ENCODE measurements at regions of chr3 and their contacts with region 1.

Region 1: DNA sequence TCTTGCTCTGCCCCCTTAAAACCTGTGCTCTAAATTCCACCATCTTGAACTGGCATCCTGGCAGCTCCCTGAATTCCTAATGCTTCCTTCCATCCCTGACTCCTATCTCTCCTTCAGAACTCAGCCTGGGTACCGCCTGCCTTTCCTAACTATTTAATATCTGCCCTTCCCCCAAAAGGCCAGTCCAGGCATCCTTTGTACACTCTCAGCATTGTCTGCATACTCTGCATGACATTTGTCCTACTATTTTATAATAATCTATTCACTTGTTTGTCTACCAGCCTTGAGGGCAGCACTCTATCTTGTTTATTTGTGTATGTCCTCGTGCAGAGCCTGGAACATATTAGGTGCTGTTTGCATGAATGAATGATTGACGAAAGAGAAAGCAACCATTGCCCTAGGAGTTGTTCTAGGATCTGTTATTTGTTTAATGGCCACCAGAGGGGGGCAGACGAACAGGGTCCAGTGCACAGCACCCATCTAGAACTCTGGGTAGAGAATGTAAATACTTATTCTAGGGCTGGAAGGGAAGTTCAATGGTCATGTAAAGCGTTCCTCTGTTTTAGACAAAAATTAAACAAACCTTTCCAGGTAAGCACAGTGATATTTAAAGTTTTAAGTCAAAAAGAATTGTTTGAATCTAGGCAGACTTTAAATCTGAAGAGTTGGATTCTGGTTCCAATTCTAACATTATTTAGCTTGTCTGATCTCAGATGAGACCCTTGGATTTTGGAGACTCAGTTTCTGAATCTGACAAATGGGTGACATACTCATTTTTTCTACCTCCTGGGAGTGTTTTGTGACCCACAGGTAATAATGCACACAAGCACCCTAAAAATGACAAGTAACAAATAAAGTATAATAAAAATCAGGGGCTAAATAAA is 125.8 kb upstream of the GALNT15 start:
- DNase-seq: peak in 1 of 2 donors; percentile 72
- ATAC-seq: peak; percentile 81 to 98 (median 84)
- H3K4me3 ChIP-seq: no peak overlapping the region
- H3K4me3 Mint-ChIP-seq: peak overlapping the region; percentile 81
- H3K27ac ChIP-seq: no peak overlapping the region
- H3K27ac Mint-ChIP-seq: no peak overlapping the region
- H3K4me1 ChIP-seq: no peaks in the 10 kb centered on the region
- H3K4me1 Mint-ChIP-seq: peaks cover 6 to 7% of the 10 kb centered on the region in 2 donors
- H3K27me3 ChIP-seq: no peaks in the 10 kb centered on the region
- H3K27me3 Mint-ChIP-seq: peaks cover 0 to 10% of the 10 kb centered on the region in 2 donors
- CTCF ChIP-seq: peak; percentile 83

Region 2: GRCh38 chr3:16247276-16248061 is 198.8 kb after region 1 on chr3:
- intact Hi-C with region 1: loop called (anchors 1 kb)
- DNase-seq: peak; percentile 64 to 91
- ATAC-seq: peak; percentile 90 to 98 (median 97)
- H3K4me3 ChIP-seq: no peak overlapping the region
- H3K4me3 Mint-ChIP-seq: no peak overlapping the region
- H3K27ac ChIP-seq: no peak overlapping the region
- H3K27ac Mint-ChIP-seq: no peak overlapping the region
- H3K4me1 ChIP-seq: peaks cover 5% of the 10 kb centered on the region
- H3K4me1 Mint-ChIP-seq: peaks cover 0 to 11% of the 10 kb centered on the region in 2 donors
- H3K27me3 ChIP-seq: no peaks in the 10 kb centered on the region
- H3K27me3 Mint-ChIP-seq: no peaks in the 10 kb centered on the region
- CTCF ChIP-seq: peak; percentile 89

Region 3: DNA sequence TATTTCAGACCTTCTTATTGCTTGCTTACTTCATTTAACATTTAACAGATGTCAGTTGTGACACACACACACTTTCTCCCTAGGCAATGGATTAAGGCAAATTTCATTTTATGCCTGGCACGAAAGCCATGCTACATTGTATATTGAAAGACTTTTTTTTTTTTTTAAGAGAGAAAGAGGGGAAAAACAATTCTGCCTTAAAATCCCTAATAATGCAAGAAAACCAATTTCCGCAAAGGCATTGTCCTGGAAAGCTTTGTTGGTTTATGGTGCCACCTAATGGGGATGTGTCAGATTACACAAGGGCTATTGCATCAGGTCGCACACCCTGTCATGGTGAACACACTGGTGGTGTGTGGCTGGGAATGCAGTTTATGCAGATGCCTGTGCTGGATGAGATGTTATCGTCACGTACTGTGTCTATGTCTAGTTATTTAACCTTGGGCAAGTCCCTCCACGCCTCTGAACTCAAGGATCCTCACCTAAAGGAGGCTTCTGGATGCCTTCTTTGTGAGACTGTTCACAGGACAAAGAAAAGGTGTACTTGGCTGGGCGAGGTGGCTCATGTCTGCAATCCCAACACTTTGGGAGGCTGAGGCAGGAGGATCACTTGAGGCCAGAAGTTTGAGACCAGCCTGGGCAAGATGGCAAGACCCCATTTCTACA is 502.1 kb after region 1 on chr3:
- intact Hi-C with region 1: loop called (anchors 2 kb)
- DNase-seq: peak; percentile 56 to 91
- ATAC-seq: peak; percentile 86 to 90 (median 88)
- H3K4me3 ChIP-seq: no peak overlapping the region
- H3K4me3 Mint-ChIP-seq: peak overlapping the region; percentile 40
- H3K27ac ChIP-seq: no peak overlapping the region
- H3K27ac Mint-ChIP-seq: peak overlapping the region; percentile 31 to 69
- H3K4me1 ChIP-seq: peaks cover 17% of the 10 kb centered on the region
- H3K4me1 Mint-ChIP-seq: peaks cover 34 to 40% of the 10 kb centered on the region in 2 donors
- H3K27me3 ChIP-seq: no peaks in the 10 kb centered on the region
- H3K27me3 Mint-ChIP-seq: peaks cover 0 to 9% of the 10 kb centered on the region in 2 donors
- CTCF ChIP-seq: peak; percentile 93